Right ventricle myocardium inferior (tissue), 1 donor: ENCODE measurements at regions of chr13 and their contacts with region 1.

Region 1: DNA sequence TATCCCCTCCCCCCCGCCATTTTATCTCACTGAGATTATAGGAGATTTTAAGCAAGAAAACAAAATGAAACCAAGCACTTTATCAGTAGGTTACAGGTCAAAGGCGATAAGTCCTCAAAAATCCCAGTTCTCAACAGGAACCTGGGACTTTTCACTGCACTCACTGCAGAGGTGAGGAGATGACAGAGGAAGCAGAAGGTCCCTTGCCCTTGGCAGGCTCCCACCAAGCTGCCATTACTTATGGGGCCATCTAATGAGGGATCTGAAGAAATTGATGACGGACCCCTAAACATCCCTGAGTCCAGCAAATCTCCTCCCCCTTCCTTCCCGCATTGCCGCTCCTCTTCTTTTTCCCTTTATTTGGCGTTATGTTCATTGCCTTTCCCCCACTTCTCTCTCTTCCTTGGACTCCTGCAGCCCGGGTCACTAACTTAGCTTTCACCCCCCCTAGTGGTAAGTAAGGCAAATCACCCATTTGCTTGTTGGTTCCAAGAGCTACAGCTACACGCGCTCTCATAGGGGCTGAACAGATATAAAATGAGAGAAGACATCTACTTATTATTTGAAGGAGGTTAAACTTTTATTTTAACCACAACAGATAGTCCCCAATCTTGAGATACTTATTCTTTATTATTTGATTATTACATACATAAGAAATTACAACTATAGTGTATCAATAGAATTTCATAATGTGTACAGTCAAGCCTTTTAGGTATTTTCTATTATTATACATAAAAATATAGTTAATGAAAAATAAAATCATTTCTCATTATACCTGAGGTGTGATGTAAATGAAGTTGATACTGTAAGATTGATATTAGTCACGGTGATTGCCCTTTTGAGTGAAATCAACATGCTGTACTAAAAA is 52.0 kb upstream of the ARGLU1 start:
- DNase-seq: no peak
- ATAC-seq: peak; percentile 84

Region 2: GRCh38 chr13:106083620-106084350 is 536.1 kb before region 1 on chr13:
- intact Hi-C with region 1: loop called (anchors 10 kb)
- DNase-seq: no peak
- ATAC-seq: no peak

Region 3: GRCh38 chr13:106551350-106551749 is 68.6 kb before region 1 on chr13:
- intact Hi-C with region 1: loop called (anchors 5 kb)
- DNase-seq: no peak
- ATAC-seq: no peak

Region 4: DNA sequence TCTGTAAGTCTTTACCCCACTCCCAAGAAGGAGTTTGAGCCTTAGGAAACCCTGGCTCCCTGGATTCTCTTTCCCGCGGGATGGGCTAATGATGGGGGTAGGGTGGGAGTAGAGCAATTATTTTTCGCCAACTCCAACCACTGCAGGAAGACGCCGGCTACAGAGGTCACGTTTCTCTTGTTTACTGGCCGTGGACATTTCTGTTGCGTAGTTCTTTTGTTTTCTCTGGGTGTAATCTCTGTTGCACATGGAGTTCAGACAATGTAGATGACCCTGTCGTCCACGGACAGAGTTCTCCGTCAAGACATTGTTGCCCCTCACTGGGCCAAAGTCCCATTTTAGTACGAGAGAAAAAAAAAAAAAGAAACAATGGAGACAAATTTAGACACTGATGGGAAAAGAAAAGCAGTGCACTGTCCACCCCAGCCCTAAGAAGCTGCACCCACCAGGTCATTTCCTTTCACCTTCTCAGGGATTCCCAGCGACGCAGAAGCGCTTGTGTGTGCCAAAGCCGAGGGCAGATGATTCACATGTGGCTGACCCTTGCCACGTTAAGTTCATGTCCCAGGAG is 81.9 kb after region 1 on chr13:
- intact Hi-C with region 1: loop called (anchors 5 kb)
- DNase-seq: no peak
- ATAC-seq: peak; percentile 44